PC-3 (cell line): ENCODE measurements at regions of chr6 and their contacts with region 1.

Region 1: GRCh38 chr6:722077-722524 is 29.2 kb upstream of the EXOC2 start:
- DNase-seq: peak; percentile 90
- ATAC-seq: peak; percentile 99
- H3K4me3 ChIP-seq: no peak overlapping the region
- H3K27ac ChIP-seq: no peak overlapping the region
- H3K4me1 ChIP-seq: no peaks in the 10 kb centered on the region
- H3K27me3 ChIP-seq: peaks cover 24% of the 10 kb centered on the region
- CTCF ChIP-seq: peak; percentile 94

Region 2: DNA sequence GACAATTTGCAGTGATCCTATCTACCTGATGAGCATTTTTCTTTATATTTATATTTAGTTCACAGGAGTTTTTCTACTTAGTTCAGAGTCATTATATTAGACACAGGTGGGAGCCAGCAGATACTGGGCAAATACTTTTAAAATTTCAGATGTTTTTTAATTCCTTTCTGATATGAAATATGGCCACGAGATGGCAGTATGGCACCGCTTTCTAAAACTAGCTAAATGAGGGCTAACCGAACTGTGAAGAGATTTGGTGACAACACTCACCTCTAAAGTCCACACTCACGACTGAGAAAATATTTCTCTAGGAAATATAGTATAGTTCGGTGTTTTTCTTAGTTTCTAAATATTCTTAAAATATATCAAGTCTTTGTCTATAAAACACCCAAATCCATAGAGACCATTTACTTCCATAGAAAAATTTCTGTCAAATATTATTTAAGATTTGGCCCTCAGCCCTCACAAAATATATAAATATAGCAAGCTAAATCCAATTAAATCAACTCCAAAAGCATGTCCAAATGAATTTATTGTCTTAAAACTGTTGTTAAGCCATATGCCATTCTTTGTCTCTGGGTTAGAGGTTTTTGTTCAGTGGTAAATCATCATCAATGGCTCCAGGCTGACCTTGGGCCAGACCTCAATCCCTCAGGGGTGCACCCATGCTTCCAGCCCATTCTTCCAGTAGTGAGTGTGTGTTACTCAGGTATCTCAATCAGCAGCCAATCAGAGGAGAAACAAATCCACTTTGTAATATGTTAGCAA is 128.8 kb before region 1 on chr6:
- CTCF ChIA-PET with region 1: interaction called, 3 read pairs
- POLR2A ChIA-PET with region 1: no interaction called
- intact Hi-C with region 1: loop called (anchors 1 kb)
- DNase-seq: peak; percentile 82
- ATAC-seq: peak; percentile 75
- H3K4me3 ChIP-seq: no peak overlapping the region
- H3K27ac ChIP-seq: no peak overlapping the region
- H3K4me1 ChIP-seq: no peaks in the 10 kb centered on the region
- H3K27me3 ChIP-seq: no peaks in the 10 kb centered on the region
- CTCF ChIP-seq: peak; percentile 74

Region 3: DNA sequence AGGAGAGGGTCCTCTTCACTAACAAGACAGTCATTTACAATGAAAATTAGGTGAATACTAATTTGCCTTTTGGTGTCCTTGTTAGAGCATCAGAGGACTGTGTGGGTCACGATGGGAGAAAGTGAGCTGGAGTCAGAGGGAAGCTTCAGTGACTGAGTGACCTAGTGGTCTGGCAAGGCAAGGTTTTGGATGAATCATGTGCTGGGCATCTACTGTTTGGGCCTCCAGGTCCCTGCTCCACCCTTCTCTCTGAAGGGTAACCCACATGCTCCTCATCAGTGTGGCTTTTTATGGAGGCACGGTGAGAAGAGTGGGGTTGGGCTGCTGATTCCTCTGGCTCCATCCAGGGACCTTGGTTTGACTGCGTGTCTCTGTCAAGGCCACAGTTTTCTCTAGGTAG is 31.4 kb after region 1 on chr6:
- CTCF ChIA-PET with region 1: no interaction called
- POLR2A ChIA-PET with region 1: no interaction called
- intact Hi-C with region 1: no loop called
- DNase-seq: peak; percentile 7
- ATAC-seq: no peak
- H3K4me3 ChIP-seq: no peak overlapping the region
- H3K27ac ChIP-seq: no peak overlapping the region
- H3K4me1 ChIP-seq: no peaks in the 10 kb centered on the region
- H3K27me3 ChIP-seq: peaks cover 69% of the 10 kb centered on the region
- CTCF ChIP-seq: no peak

Region 4: GRCh38 chr6:1436334-1437306 is 714.5 kb after region 1 on chr6:
- CTCF ChIA-PET with region 1: interaction called, 5 read pairs
- POLR2A ChIA-PET with region 1: no interaction called
- intact Hi-C with region 1: loop called (anchors 1 kb)
- DNase-seq: peak; percentile 92
- ATAC-seq: peak; percentile 93
- H3K4me3 ChIP-seq: no peak overlapping the region; the same call in 1 of the 2 replicates
- H3K27ac ChIP-seq: no peak overlapping the region
- H3K4me1 ChIP-seq: peaks cover 4% of the 10 kb centered on the region; the same call in 1 of the 2 replicates
- H3K27me3 ChIP-seq: peaks cover 19% of the 10 kb centered on the region
- CTCF ChIP-seq: peak; percentile 88